PC-9 (cell line): ENCODE measurements at regions of chr17 and their contacts with region 1.

Region 1: GRCh38 chr17:164303-165235 is 16.9 kb downstream of the DOC2B start:
- DNase-seq: peak in 1 of 2 experiments; percentile 46
- H3K4me3 ChIP-seq: no peak overlapping the region
- H3K27ac ChIP-seq: no peak overlapping the region
- H3K4me1 ChIP-seq: no peaks in the 10 kb centered on the region
- H3K27me3 ChIP-seq: peaks cover 19% of the 10 kb centered on the region
- CTCF ChIP-seq: peak; percentile 55

Region 2: GRCh38 chr17:142102-142661 is 22.4 kb before region 1 on chr17:
- CTCF ChIA-PET with region 1: no interaction called
- POLR2A ChIA-PET with region 1: no interaction called
- intact Hi-C with region 1: no loop called
- DNase-seq: no peak
- H3K4me3 ChIP-seq: no peak overlapping the region
- H3K27ac ChIP-seq: no peak overlapping the region
- H3K4me1 ChIP-seq: no peaks in the 10 kb centered on the region
- H3K27me3 ChIP-seq: no peaks in the 10 kb centered on the region
- CTCF ChIP-seq: no peak

Region 3: DNA sequence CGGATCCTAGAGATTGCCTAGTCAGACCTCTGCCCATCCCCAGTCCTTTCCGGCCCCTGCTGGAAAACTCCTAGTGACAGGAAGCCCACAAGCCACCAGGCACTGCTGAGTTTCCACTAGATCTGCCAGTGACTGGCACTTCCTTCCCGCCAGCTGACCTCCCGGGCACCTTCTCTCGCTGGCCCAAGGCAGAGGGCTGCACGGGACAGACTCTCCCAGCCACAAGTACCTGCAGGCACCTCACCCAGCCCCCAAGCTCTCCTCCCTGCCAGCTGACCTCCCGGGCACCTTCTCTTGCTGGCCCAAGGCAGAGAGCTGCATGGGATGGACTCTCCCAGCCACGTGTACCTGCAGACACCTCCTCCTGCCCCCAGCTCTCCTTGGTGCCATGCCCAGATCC is 83.2 kb after region 1 on chr17:
- CTCF ChIA-PET with region 1: no interaction called
- POLR2A ChIA-PET with region 1: no interaction called
- intact Hi-C with region 1: no loop called
- DNase-seq: peak in 1 of 2 experiments; percentile 35
- H3K4me3 ChIP-seq: no peak overlapping the region
- H3K27ac ChIP-seq: no peak overlapping the region
- H3K4me1 ChIP-seq: no peaks in the 10 kb centered on the region
- H3K27me3 ChIP-seq: no peaks in the 10 kb centered on the region
- CTCF ChIP-seq: no peak

Region 4: DNA sequence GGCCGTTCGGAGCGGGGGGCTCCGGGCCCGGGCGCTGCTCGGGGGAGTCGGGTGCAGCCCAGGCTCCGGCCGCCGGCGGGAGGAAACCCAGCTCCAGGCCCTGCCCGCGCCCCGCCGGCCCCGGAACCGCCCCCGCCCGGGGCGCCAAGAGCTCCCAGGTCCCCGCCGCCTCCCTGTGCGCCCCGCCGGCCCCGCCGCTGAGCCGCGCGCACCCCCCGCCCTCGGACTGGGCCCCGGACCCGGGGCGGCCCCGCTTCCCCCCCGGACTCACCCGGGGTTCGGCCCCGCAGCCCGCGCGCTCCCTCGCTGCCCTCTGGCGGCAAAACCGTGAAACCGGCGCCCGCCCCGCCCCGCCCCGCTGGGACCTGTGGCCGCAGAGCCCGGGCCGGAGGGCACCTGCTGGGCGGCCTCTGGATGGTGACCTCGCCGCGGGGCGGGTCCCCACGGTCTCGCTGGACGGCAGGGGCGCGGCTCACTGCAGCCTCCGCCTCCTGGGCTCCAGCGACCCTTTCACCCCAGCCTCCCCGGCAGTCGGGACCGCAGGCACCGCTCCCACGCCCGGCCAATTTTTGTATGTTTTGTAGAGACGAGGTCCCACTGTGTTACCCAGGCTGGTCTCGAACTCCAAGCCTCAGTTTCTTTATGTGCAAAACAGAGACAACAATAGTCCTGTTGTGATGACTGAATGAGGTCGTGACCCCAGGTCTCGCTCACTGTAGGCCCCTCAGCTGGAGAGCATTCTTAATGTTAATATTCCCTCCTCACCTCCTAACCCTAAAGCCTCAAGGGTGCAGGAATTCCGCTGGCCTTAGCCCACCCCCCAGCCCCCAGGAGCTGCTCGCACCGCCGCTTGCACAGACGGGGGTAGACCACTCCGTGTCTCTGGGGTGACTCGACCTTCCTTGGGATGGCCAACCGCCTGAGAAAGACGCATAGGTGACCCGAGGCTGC is 221.6 kb after region 1 on chr17:
- CTCF ChIA-PET with region 1: interaction called, 24 read pairs
- POLR2A ChIA-PET with region 1: no interaction called
- intact Hi-C with region 1: no loop called
- DNase-seq: peak; percentile 47 to 90
- H3K4me3 ChIP-seq: peak overlapping the region; percentile 51; the same call in 1 of the 2 replicates
- H3K27ac ChIP-seq: no peak overlapping the region
- H3K4me1 ChIP-seq: 0 out of 2 replicates have a peak, but pooled peaks cover 3% of the 10 kb centered on the region
- H3K27me3 ChIP-seq: 0 out of 2 replicates have a peak, but pooled peaks cover 4% of the 10 kb centered on the region
- CTCF ChIP-seq: peak; percentile 59; the same call in 1 of the 2 replicates